ENCODE measurements at regions of chr6 and their contacts with region 1.

Region 1: GRCh38 chr6:79005024-79005423 is 73.0 kb downstream of the PHIP start:
- DNase-seq: no peak
- H3K4me3 ChIP-seq: no peak overlapping the region
- H3K27ac ChIP-seq: no peak overlapping the region
- H3K4me1 ChIP-seq: no peaks in the 10 kb centered on the region
- CTCF ChIP-seq: no peak

Region 2: GRCh38 chr6:78883651-78884050 is 121.4 kb before region 1 on chr6:
- CTCF ChIA-PET with region 1: no interaction called
- POLR2A ChIA-PET with region 1: no interaction called
- intact Hi-C with region 1: no loop called
- DNase-seq: no peak
- H3K4me3 ChIP-seq: no peak overlapping the region
- H3K27ac ChIP-seq: no peak overlapping the region
- H3K4me1 ChIP-seq: no peaks in the 10 kb centered on the region
- CTCF ChIP-seq: no peak

Region 3: GRCh38 chr6:78961513-78961912 is 43.5 kb before region 1 on chr6:
- CTCF ChIA-PET with region 1: no interaction called
- POLR2A ChIA-PET with region 1: interaction called, 3 read pairs
- intact Hi-C with region 1: loop called (anchors 5 kb)
- DNase-seq: no peak
- H3K4me3 ChIP-seq: no peak overlapping the region
- H3K27ac ChIP-seq: no peak overlapping the region
- H3K4me1 ChIP-seq: no peaks in the 10 kb centered on the region
- CTCF ChIP-seq: no peak

Region 4: GRCh38 chr6:79048611-79049010 is 43.6 kb after region 1 on chr6:
- CTCF ChIA-PET with region 1: no interaction called
- POLR2A ChIA-PET with region 1: no interaction called
- intact Hi-C with region 1: loop called (anchors 5 kb)
- DNase-seq: peak; percentile 17
- H3K4me3 ChIP-seq: no peak overlapping the region
- H3K27ac ChIP-seq: no peak overlapping the region
- H3K4me1 ChIP-seq: no peaks in the 10 kb centered on the region
- CTCF ChIP-seq: peak; percentile 63